ENCODE measurements at regions of chr19 and their contacts with region 1.

Region 1: DNA sequence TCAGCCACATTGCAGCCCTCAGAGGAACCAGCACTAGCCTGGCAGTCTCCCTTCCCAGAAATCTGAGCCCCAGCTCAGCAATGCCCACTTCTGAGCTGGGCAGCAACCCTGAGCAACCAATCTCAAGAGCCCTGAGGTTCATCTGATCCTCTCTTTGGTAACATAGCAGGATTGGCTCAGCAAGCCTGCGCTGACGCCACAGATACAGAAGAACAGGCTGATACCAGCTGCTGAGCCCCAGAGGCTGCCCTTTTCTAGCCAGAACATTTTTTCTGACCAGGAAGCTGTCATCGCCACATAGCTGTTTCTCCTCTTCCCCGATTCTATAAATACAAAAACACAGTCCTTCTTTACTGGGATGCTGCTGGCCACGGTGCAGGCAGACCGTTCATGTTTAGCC is 59.8 kb downstream of the TRPM4 start:
- DNase-seq: no peak
- H3K4me3 ChIP-seq: no peak overlapping the region
- H3K27ac ChIP-seq: no peak overlapping the region
- H3K4me1 ChIP-seq: no peaks in the 10 kb centered on the region
- H3K27me3 ChIP-seq: no peaks in the 10 kb centered on the region
- CTCF ChIP-seq: no peak
- EP300 ChIP-seq: no peak
- POLR2A ChIP-seq: no peak

Region 2: DNA sequence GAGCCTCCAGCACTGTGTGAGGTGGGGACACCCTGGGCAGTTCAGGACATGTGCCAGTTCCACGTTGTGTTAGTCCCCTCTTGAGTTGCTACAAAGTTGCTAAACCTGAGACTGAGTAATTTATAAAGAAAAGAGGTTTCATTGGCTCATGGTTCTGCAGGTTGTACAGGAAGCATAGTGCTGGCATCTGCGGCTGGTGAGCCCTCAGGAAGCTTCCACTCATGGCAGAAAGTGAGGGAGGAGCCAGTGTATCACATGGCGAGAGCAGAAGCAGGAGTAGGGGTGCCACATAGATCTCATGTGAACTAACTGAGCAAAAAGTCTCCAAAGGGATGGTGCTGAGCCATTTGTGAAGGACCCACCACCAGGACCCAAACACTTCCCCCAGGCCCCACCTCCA is 26.6 kb before region 1 on chr19:
- intact Hi-C with region 1: loop called in 1 of 4 experiments (anchors 1 kb)
- DNase-seq: no peak
- H3K4me3 ChIP-seq: no peak overlapping the region
- H3K27ac ChIP-seq: no peak overlapping the region
- H3K4me1 ChIP-seq: no peaks in the 10 kb centered on the region
- H3K27me3 ChIP-seq: no peaks in the 10 kb centered on the region
- CTCF ChIP-seq: no peak
- EP300 ChIP-seq: no peak
- POLR2A ChIP-seq: no peak